Dendritic cell treated with granulocyte-macrophage colony-stimulating factor and Interleukin-4, amounts not matched to agents 40 ng/mL and 50 ng/mL, for 4 days (primary cell): ENCODE measurements at regions of chr20 and their contacts with region 1.

Region 1: GRCh38 chr20:208942-209566 is 18.0 kb upstream of the DEFB129 start:
- H3K4me3 Mint-ChIP-seq: no peak overlapping the region
- H3K27ac Mint-ChIP-seq: no peak overlapping the region
- H3K4me1 Mint-ChIP-seq: no peaks in the 10 kb centered on the region
- H3K27me3 Mint-ChIP-seq: peaks cover 3% of the 10 kb centered on the region

Region 2: GRCh38 chr20:242905-243304 is 33.9 kb after region 1 on chr20:
- intact Hi-C with region 1: no loop called
- H3K4me3 Mint-ChIP-seq: no peak overlapping the region
- H3K27ac Mint-ChIP-seq: no peak overlapping the region
- H3K4me1 Mint-ChIP-seq: no peaks in the 10 kb centered on the region
- H3K27me3 Mint-ChIP-seq: no peaks in the 10 kb centered on the region

Region 3: GRCh38 chr20:266596-267562 is 57.8 kb after region 1 on chr20:
- intact Hi-C with region 1: loop called (anchors 1 kb)
- H3K4me3 Mint-ChIP-seq: peak overlapping the region; percentile 78
- H3K27ac Mint-ChIP-seq: peak overlapping the region; percentile 46
- H3K4me1 Mint-ChIP-seq: peaks cover 12% of the 10 kb centered on the region
- H3K27me3 Mint-ChIP-seq: peaks cover 25% of the 10 kb centered on the region

Region 4: GRCh38 chr20:330233-331149 is 121.4 kb after region 1 on chr20:
- intact Hi-C with region 1: loop called (anchors 2 kb)
- H3K4me3 Mint-ChIP-seq: no peak overlapping the region
- H3K27ac Mint-ChIP-seq: no peak overlapping the region
- H3K4me1 Mint-ChIP-seq: peaks cover 58% of the 10 kb centered on the region
- H3K27me3 Mint-ChIP-seq: peaks cover 21% of the 10 kb centered on the region